WTC11 (cell line): ENCODE measurements at regions of chr15 and their contacts with region 1.

Region 1: GRCh38 chr15:45645026-45645980 is 10.5 kb downstream of the SQOR start:
- DNase-seq: no peak
- ATAC-seq: no peak
- H3K4me3 Mint-ChIP-seq: no peak overlapping the region
- H3K27ac Mint-ChIP-seq: no peak overlapping the region
- H3K4me1 Mint-ChIP-seq: 0 out of 2 replicates have a peak, but pooled peaks cover 2% of the 10 kb centered on the region
- H3K27me3 Mint-ChIP-seq: peaks cover 8% of the 10 kb centered on the region
- CTCF ChIP-seq: no peak

Region 2: GRCh38 chr15:45634442-45635190 is 10.7 kb before region 1 on chr15 and contains the start of gene SQOR:
- CTCF ChIA-PET with region 1: interaction called, 17 read pairs
- POLR2A ChIA-PET with region 1: no interaction called
- DNase-seq: peak; percentile 65
- ATAC-seq: peak; percentile 84
- H3K4me3 Mint-ChIP-seq: peak within 1 kb of the TSS; percentile 79
- H3K27ac Mint-ChIP-seq: no peak within 1 kb of the TSS
- H3K4me1 Mint-ChIP-seq: peaks cover 7% of the 10 kb centered on the region
- H3K27me3 Mint-ChIP-seq: peaks cover 72% of the 10 kb centered on the region
- CTCF ChIP-seq: no peak
- total RNA-seq, gene SQOR: 0.44 to 0.72 TPM (median 0.69 TPM) in 3 replicates